T-cell (primary cell): ENCODE measurements at regions of chr2 and their contacts with region 1.

Region 1: GRCh38 chr2:204159526-204159925 is 223.0 kb downstream of the ICOS start:
- DNase-seq: no peak
- ATAC-seq: no peak
- H3K4me3 ChIP-seq: no peak overlapping the region
- H3K4me3 Mint-ChIP-seq: no peak overlapping the region
- H3K27ac ChIP-seq: no peak overlapping the region
- H3K27ac Mint-ChIP-seq: no peak overlapping the region
- H3K4me1 ChIP-seq: no peaks in the 10 kb centered on the region
- H3K4me1 Mint-ChIP-seq: no peaks in the 10 kb centered on the region
- H3K27me3 ChIP-seq: peaks cover 0 to 4% of the 10 kb centered on the region in 2 experiments
- H3K27me3 Mint-ChIP-seq: peaks cover 7 to 9% of the 10 kb centered on the region in 2 donors

Region 2: GRCh38 chr2:202808754-202809153 is 1350.8 kb before region 1 on chr2:
- CTCF ChIA-PET with region 1: no interaction called
- POLR2A ChIA-PET with region 1: no interaction called
- DNase-seq: no peak
- ATAC-seq: no peak
- H3K4me3 ChIP-seq: no peak overlapping the region
- H3K4me3 Mint-ChIP-seq: no peak overlapping the region
- H3K27ac ChIP-seq: no peak overlapping the region
- H3K27ac Mint-ChIP-seq: no peak overlapping the region
- H3K4me1 ChIP-seq: no peaks in the 10 kb centered on the region
- H3K4me1 Mint-ChIP-seq: no peaks in the 10 kb centered on the region
- H3K27me3 ChIP-seq: no peaks in the 10 kb centered on the region
- H3K27me3 Mint-ChIP-seq: no peaks in the 10 kb centered on the region

Region 3: DNA sequence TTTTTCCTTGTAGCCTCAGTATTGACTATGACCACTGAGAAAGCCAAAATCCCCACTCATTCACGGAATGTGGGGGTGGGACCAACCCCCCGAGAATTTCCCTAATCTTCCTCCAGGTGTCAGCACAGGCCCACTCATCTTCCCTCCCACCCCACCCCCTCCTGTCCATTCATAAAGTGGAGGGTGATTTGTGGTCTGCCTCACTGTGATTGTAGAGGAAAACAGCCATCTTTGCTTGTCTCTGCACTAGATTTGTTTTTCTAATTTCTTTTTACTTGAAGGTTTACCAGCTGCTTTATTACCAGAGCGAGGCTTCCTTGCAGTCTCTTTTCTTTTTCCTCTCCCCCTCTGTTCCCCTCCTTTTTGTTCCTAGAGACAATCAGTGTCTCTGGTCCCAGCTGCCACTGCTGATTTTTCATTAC is 51.2 kb before region 1 on chr2:
- CTCF ChIA-PET with region 1: interaction called in 1 of 2 experiments, 3 read pairs
- POLR2A ChIA-PET with region 1: interaction called in 1 of 2 experiments, 10 read pairs
- DNase-seq: peak in 33 of 35 experiments; percentile 12 to 79 (median 40)
- ATAC-seq: peak; percentile 64 to 79 (median 74)
- H3K4me3 ChIP-seq: peak overlapping the region; percentile 6 to 26
- H3K4me3 Mint-ChIP-seq: peak overlapping the region; percentile 46 to 78 (median 69)
- H3K27ac ChIP-seq: no peak overlapping the region
- H3K27ac Mint-ChIP-seq: peak overlapping the region; percentile 2 to 49
- H3K4me1 ChIP-seq: peaks cover 29 to 46% of the 10 kb centered on the region in 2 experiments
- H3K4me1 Mint-ChIP-seq: peaks cover 38 to 46% (median 42%) of the 10 kb centered on the region in 3 donors
- H3K27me3 ChIP-seq: no peaks in the 10 kb centered on the region
- H3K27me3 Mint-ChIP-seq: no peaks in the 10 kb centered on the region

Region 4: DNA sequence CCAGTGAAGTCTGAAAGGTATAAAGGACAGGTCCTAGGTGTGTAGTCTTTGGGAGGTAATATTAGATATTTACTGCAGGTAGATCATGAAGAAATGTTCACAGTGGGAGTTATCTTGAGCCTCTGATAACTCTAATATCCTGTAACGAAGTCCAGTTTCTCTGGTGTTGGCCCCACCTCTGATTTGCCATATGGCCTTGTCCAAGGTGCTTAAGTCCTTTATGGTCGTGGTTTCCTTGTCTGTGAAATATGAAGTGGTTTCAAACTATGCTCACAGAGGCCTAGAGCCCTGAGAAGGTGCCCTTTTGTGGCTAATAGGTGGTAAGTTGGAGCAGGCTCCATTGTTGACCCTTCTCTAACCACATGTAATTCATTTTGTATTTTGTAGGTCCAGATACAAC is 32.3 kb before region 1 on chr2:
- CTCF ChIA-PET with region 1: no interaction called
- POLR2A ChIA-PET with region 1: no interaction called
- DNase-seq: no peak
- ATAC-seq: no peak
- H3K4me3 ChIP-seq: no peak overlapping the region
- H3K4me3 Mint-ChIP-seq: no peak overlapping the region
- H3K27ac ChIP-seq: no peak overlapping the region
- H3K27ac Mint-ChIP-seq: no peak overlapping the region
- H3K4me1 ChIP-seq: no peaks in the 10 kb centered on the region
- H3K4me1 Mint-ChIP-seq: no peaks in the 10 kb centered on the region
- H3K27me3 ChIP-seq: peaks cover 0 to 3% of the 10 kb centered on the region in 2 experiments
- H3K27me3 Mint-ChIP-seq: peaks cover 5% of the 10 kb centered on the region in 2 donors

Region 5: GRCh38 chr2:204183625-204184024 is 24.1 kb after region 1 on chr2:
- CTCF ChIA-PET with region 1: no interaction called
- POLR2A ChIA-PET with region 1: no interaction called
- DNase-seq: no peak
- ATAC-seq: no peak
- H3K4me3 ChIP-seq: no peak overlapping the region
- H3K4me3 Mint-ChIP-seq: no peak overlapping the region
- H3K27ac ChIP-seq: no peak overlapping the region
- H3K27ac Mint-ChIP-seq: no peak overlapping the region
- H3K4me1 ChIP-seq: no peaks in the 10 kb centered on the region
- H3K4me1 Mint-ChIP-seq: peaks cover 16 to 25% (median 19%) of the 10 kb centered on the region in 3 donors
- H3K27me3 ChIP-seq: no peaks in the 10 kb centered on the region
- H3K27me3 Mint-ChIP-seq: peaks cover under 1 to 1% of the 10 kb centered on the region in 2 donors